ENCODE measurements at regions of chr12 and their contacts with region 1.

Region 1: GRCh38 chr12:124917135-124917840 is 2.8 kb upstream of the UBC start:
- DNase-seq: peak; percentile 99
- H3K4me3 ChIP-seq: peak overlapping the region; percentile 15 to 99 (median 62)
- H3K27ac ChIP-seq: peak overlapping the region; percentile 83 to 100
- H3K4me1 ChIP-seq: peaks cover 56 to 80% (median 71%) of the 10 kb centered on the region in 4 experiments
- H3K27me3 ChIP-seq: no peaks in the 10 kb centered on the region

Region 2: GRCh38 chr12:124927201-124928094 is 10.2 kb after region 1 on chr12:
- CTCF ChIA-PET with region 1: interaction called, 10 read pairs
- POLR2A ChIA-PET with region 1: interaction called, 11 read pairs
- DNase-seq: peak; percentile 90 to 94 (median 94)
- H3K4me3 ChIP-seq: peak overlapping the region; percentile 32 to 100 (median 94)
- H3K27ac ChIP-seq: peak overlapping the region; percentile 56 to 89
- H3K4me1 ChIP-seq: peaks cover 0 to 13% (median 6%) of the 10 kb centered on the region in 4 experiments
- H3K27me3 ChIP-seq: peaks cover 0 to 2% (median 0%) of the 10 kb centered on the region in 5 experiments

Region 3: GRCh38 chr12:124964836-124965462 is 47.7 kb after region 1 on chr12:
- CTCF ChIA-PET with region 1: no interaction called
- POLR2A ChIA-PET with region 1: no interaction called
- DNase-seq: no peak
- H3K4me3 ChIP-seq: no peak overlapping the region
- H3K27ac ChIP-seq: no peak overlapping the region
- H3K4me1 ChIP-seq: no peaks in the 10 kb centered on the region
- H3K27me3 ChIP-seq: no peaks in the 10 kb centered on the region